ENCODE measurements at regions of chr15 and their contacts with region 1.

Region 1: GRCh38 chr15:98779463-98780071 is 131.2 kb downstream of the IGF1R start:
- DNase-seq: peak; percentile 82 to 96
- H3K4me3 ChIP-seq: no peak overlapping the region
- H3K27ac ChIP-seq: no peak overlapping the region
- H3K4me1 ChIP-seq: peaks cover 2 to 22% (median 15%) of the 10 kb centered on the region in 4 experiments; a peak in 5 of 7 replicates
- H3K27me3 ChIP-seq: no peaks in the 10 kb centered on the region
- CTCF ChIP-seq: peak; percentile 81 to 99 (median 92)
- EP300 ChIP-seq: no peak
- POLR2A ChIP-seq: no peak
- RAD21 ChIP-seq: peak; percentile 89 to 95

Region 2: GRCh38 chr15:98658831-98659699 is 120.5 kb before region 1 on chr15:
- CTCF ChIA-PET with region 1: interaction called, 11 read pairs
- POLR2A ChIA-PET with region 1: no interaction called
- DNase-seq: peak in 1 of 2 experiments; percentile 46
- H3K4me3 ChIP-seq: no peak overlapping the region
- H3K27ac ChIP-seq: no peak overlapping the region
- H3K4me1 ChIP-seq: peaks cover 8 to 31% (median 24%) of the 10 kb centered on the region in 4 experiments
- H3K27me3 ChIP-seq: no peaks in the 10 kb centered on the region
- CTCF ChIP-seq: peak; percentile 42 to 86 (median 72)
- EP300 ChIP-seq: no peak
- POLR2A ChIP-seq: no peak
- RAD21 ChIP-seq: peak; percentile 73 to 80

Region 3: DNA sequence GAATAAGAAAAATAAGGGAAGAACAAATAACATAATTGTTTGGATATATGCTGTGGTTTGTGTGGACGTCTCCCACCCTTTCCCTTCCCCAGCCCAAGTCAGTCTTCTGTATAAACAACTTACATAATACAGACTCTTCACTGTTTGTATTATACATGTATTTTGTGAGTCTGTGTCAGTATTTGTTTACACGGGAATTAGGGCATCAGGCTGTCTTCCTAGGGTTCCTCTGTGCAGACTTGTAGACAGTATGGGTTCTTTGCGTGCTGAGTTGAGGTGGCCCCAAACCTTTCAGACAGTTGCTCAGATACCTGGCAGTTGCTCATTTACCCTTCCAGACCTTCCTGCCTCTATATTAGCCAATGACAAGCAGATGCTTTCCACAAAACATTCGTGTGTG is 27.7 kb before region 1 on chr15:
- CTCF ChIA-PET with region 1: interaction called, 19 read pairs
- POLR2A ChIA-PET with region 1: no interaction called
- DNase-seq: no peak
- H3K4me3 ChIP-seq: no peak overlapping the region
- H3K27ac ChIP-seq: no peak overlapping the region
- H3K4me1 ChIP-seq: peaks cover 2 to 10% (median 5%) of the 10 kb centered on the region in 4 experiments; a peak in 6 of 7 replicates
- H3K27me3 ChIP-seq: no peaks in the 10 kb centered on the region
- CTCF ChIP-seq: no peak
- EP300 ChIP-seq: no peak
- POLR2A ChIP-seq: no peak
- RAD21 ChIP-seq: no peak

Region 4: GRCh38 chr15:98794754-98795153 is 15.2 kb after region 1 on chr15:
- CTCF ChIA-PET with region 1: interaction called, 36 read pairs
- POLR2A ChIA-PET with region 1: interaction called, 3 read pairs
- DNase-seq: no peak
- H3K4me3 ChIP-seq: no peak overlapping the region
- H3K27ac ChIP-seq: no peak overlapping the region
- H3K4me1 ChIP-seq: peaks cover 12 to 46% (median 30%) of the 10 kb centered on the region in 4 experiments
- H3K27me3 ChIP-seq: no peaks in the 10 kb centered on the region
- CTCF ChIP-seq: no peak
- EP300 ChIP-seq: no peak
- POLR2A ChIP-seq: no peak
- RAD21 ChIP-seq: no peak

Region 5: GRCh38 chr15:98815207-98815606 is 35.6 kb after region 1 on chr15:
- CTCF ChIA-PET with region 1: interaction called, 12 read pairs
- POLR2A ChIA-PET with region 1: no interaction called
- DNase-seq: no peak
- H3K4me3 ChIP-seq: no peak overlapping the region
- H3K27ac ChIP-seq: no peak overlapping the region
- H3K4me1 ChIP-seq: peaks cover 4 to 26% (median 8%) of the 10 kb centered on the region in 4 experiments; a peak in 6 of 7 replicates
- H3K27me3 ChIP-seq: no peaks in the 10 kb centered on the region
- CTCF ChIP-seq: no peak
- EP300 ChIP-seq: no peak
- POLR2A ChIP-seq: no peak
- RAD21 ChIP-seq: no peak

Region 6: DNA sequence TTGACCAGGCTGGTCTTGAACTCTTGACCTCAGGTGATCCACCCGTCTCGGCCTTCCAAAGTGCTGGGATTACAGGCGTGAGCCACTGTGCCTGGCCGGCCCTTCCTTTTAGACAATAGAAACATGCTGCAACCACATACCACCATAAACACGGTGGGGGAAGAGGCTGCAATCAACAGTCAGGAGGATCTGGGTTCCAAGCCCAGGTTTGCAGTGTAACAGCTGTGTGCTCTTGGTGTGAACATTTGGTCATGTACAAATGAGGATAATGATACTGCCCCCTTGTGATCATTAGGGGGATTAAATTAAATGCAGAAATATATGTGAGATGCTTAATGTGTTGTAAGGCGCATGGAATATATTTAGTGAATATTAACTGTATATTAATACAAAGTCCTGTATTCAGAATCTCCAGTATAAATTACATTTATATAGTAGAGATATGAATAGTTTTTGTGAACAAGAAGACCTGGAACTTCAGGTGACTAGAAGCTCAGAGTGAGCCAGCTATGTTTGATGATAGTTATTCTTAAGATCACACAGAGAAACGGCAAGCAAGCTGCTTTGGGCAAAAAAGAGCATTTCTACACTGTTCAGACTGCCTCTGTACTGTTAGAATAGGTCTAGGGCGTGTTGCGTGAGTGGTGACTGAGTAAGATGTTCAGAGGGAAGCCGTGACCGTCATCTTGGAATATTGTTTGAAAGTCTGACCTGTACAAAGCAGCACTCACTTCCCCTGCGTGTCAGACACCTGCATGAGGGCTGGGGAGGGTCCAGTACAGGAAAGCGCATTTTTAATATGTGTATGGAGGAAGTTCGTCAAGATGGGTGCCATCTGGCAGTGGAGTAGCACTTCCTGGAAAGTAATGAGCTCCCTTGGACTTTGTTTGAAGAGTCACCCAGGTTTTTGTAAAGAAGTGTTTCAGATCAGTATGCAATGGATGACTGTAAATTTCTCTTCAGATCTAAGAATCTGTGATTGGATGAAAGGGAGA is 102.3 kb after region 1 on chr15:
- CTCF ChIA-PET with region 1: interaction called, 27 read pairs
- POLR2A ChIA-PET with region 1: no interaction called
- DNase-seq: no peak
- H3K4me3 ChIP-seq: no peak overlapping the region
- H3K27ac ChIP-seq: no peak overlapping the region
- H3K4me1 ChIP-seq: peaks cover 0 to 7% (median 3%) of the 10 kb centered on the region in 4 experiments; a peak in 5 of 7 replicates
- H3K27me3 ChIP-seq: no peaks in the 10 kb centered on the region
- CTCF ChIP-seq: peak in 2 of 3 experiments; percentile 32 to 56; a peak in 2 of 4 replicates
- EP300 ChIP-seq: no peak
- POLR2A ChIP-seq: no peak
- RAD21 ChIP-seq: peak; percentile 54 to 60

Region 7: GRCh38 chr15:99031681-99032080 is 252.1 kb after region 1 on chr15:
- CTCF ChIA-PET with region 1: no interaction called
- POLR2A ChIA-PET with region 1: no interaction called
- DNase-seq: no peak
- H3K4me3 ChIP-seq: no peak overlapping the region
- H3K27ac ChIP-seq: no peak overlapping the region
- H3K4me1 ChIP-seq: no peaks in the 10 kb centered on the region; a peak in 1 of 7 replicates
- H3K27me3 ChIP-seq: no peaks in the 10 kb centered on the region
- CTCF ChIP-seq: no peak
- EP300 ChIP-seq: no peak
- POLR2A ChIP-seq: no peak
- RAD21 ChIP-seq: no peak